Psoas muscle (tissue), 8 donors: ENCODE measurements at regions of chr14 and their contacts with region 1.

Region 1: GRCh38 chr14:68676511-68676943 is 116.3 kb downstream of the ZFP36L1 start:
- DNase-seq: no peak
- ATAC-seq: no peak
- H3K4me3 ChIP-seq: no peak overlapping the region
- H3K27ac ChIP-seq: no peak overlapping the region
- H3K4me1 ChIP-seq: peaks cover 25% of the 10 kb centered on the region
- H3K27me3 ChIP-seq: no peaks in the 10 kb centered on the region
- CTCF ChIP-seq: no peak

Region 2: DNA sequence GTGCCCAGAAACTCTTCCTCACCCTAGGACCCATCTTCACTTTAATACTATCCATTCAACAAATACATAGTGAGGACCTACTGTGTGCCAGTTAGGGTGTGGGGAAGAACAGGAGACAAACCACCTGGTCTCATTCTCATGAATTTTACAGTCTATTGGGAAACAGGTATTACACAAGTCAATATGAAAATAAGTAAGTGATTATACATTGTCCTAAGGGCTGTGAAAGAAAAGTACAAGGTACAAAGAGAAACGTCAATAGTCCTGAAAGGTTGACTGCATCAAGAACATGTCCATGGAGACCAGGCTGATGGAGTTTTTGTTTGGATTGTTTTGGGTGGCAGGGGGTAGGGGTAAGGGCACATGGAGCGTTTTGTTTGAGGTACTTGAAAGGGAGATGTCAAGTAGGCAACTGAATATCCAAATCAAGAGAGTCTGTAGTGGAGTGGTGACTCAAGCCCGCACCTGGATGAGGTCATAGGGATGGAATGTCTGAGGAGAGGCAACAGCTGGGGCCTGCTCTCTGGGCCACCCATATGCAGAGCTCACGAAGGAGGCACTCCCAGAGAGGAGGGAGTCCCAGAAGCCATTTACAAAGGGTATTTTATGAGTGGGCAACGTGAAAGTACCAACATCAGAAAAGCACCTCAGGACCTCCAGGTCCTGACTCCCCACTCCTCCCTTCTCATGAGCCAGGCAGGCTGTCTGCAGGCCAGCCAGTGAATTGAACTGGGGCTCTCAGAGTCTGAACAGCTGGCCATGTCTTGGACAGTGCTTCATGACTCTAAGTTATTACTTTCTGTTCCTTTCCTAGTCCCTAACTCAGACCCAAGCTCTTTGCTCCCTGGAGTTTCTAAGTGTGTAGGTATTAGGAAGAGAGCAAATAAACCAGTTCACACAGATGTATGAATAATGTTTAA is 155.6 kb before region 1 on chr14:
- intact Hi-C with region 1: loop called in 1 of 2 experiments (anchors 5 kb)
- DNase-seq: no peak
- ATAC-seq: peak in 2 of 4 donors; percentile 68 to 74
- H3K4me3 ChIP-seq: no peak overlapping the region
- H3K27ac ChIP-seq: no peak overlapping the region
- H3K4me1 ChIP-seq: peaks cover 25% of the 10 kb centered on the region
- H3K27me3 ChIP-seq: no peaks in the 10 kb centered on the region
- CTCF ChIP-seq: no peak

Region 3: GRCh38 chr14:69726761-69727511 is 1050.4 kb after region 1 on chr14:
- intact Hi-C with region 1: no loop called
- DNase-seq: peak; percentile 85 to 90
- ATAC-seq: peak; percentile 93 to 98 (median 94)
- H3K4me3 ChIP-seq: peak overlapping the region; percentile 66
- H3K27ac ChIP-seq: no peak overlapping the region
- H3K4me1 ChIP-seq: peaks cover 10% of the 10 kb centered on the region
- H3K27me3 ChIP-seq: no peaks in the 10 kb centered on the region
- CTCF ChIP-seq: peak; percentile 97